ENCODE measurements at regions of chr1 and their contacts with region 1.

Region 1: GRCh38 chr1:27725374-27726173 is at the start of gene FAM76A:
- DNase-seq: peak; percentile 100
- ATAC-seq: peak; percentile 93
- H3K4me3 Mint-ChIP-seq: peak within 1 kb of the TSS; percentile 84
- H3K27ac Mint-ChIP-seq: peak within 1 kb of the TSS; percentile 93
- H3K4me1 Mint-ChIP-seq: peaks cover 20% of the 10 kb centered on the region
- H3K27me3 Mint-ChIP-seq: peaks cover 2% of the 10 kb centered on the region
- total RNA-seq, gene FAM76A: 11.8 to 13.2 TPM

Region 2: GRCh38 chr1:27772933-27773825 is 47.6 kb after region 1 on chr1 and contains the start of gene STX12:
- CTCF ChIA-PET with region 1: interaction called, 24 read pairs
- DNase-seq: peak; percentile 100
- ATAC-seq: peak; percentile 98
- H3K4me3 Mint-ChIP-seq: peak within 1 kb of the TSS; percentile 86
- H3K27ac Mint-ChIP-seq: peak within 1 kb of the TSS; percentile 97
- H3K4me1 Mint-ChIP-seq: peaks cover 33% of the 10 kb centered on the region
- H3K27me3 Mint-ChIP-seq: no peaks in the 10 kb centered on the region
- total RNA-seq, gene STX12: 20.4 to 29.5 TPM

Measured in activated CD8-positive, alpha-beta memory T cell treated with anti-CD3 and anti-CD28 coated beads, Interleukin-2, amount 10 ng/mL, durations not matched to agents 7 days and 5 days (primary cell).